Gastrocnemius medialis (tissue), 4 donors: ENCODE measurements at regions of chr17 and their contacts with region 1.

Region 1: DNA sequence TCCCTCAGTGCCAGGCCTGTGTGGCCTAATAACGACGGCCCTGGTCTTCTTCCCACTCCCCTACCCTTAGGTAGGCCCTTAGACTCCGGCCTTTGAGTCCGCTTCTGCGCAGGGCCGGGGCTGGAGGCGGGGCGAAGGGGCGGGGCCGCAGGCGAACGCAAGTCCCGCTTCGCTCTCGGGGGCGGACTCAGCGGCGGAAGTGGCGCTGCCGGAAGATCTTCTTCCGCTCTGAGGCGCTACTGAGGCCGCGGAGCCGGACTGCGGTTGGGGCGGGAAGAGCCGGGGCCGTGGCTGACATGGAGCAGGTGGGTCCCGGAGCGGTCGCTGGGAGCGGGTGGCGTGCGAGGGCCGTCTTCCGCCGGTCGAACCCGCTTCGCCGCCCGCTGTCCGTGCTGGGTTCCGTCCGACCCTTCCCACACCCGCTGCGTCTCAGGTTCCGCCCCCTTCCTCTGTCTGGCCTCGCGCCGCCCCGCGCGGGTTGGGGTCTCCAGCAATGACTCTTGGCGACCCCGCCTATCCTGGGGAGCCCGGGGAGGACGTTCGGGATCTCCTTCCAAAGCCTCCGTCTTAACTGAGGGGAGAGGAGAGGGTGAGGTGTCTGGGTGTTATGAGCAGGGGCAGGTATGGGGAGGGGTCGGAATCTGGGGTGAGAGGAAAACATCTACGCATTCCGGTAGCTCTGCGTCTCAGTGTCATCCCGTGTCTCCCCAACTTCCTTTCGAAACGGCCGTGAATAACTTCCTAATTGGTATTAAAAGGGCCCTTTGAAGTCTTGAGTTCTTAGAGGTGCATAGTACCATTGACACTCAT is at the start of gene STARD3:
- DNase-seq: peak; percentile 84 to 89
- ATAC-seq: peak; percentile 92 to 93
- H3K4me3 ChIP-seq: peak within 1 kb of the TSS; percentile 76 to 97 (median 92)
- H3K27ac ChIP-seq: peak within 1 kb of the TSS; percentile 93 to 99 (median 94)
- H3K4me1 ChIP-seq: peaks cover 41 to 48% of the 10 kb centered on the region in 2 donors
- H3K27me3 ChIP-seq: no peaks in the 10 kb centered on the region
- CTCF ChIP-seq: peak in 3 of 5 experiments; percentile 16 to 44 (median 26)
- POLR2A ChIP-seq: peak; percentile 46 to 56
- total RNA-seq, gene STARD3: 31.0 to 41.7 (median 41.0) TPM

Region 2: GRCh38 chr17:39199820-39200069 is 437.4 kb before region 1 on chr17:
- in situ Hi-C with region 1: no loop called
- intact Hi-C with region 1: no loop called
- DNase-seq: peak; percentile 92
- ATAC-seq: peak; percentile 69 to 82
- H3K4me3 ChIP-seq: peak overlapping the region; percentile 79 to 94 (median 84)
- H3K27ac ChIP-seq: peak overlapping the region; percentile 87 to 99 (median 94)
- H3K4me1 ChIP-seq: peaks cover 44 to 45% of the 10 kb centered on the region in 2 donors
- H3K27me3 ChIP-seq: no peaks in the 10 kb centered on the region
- CTCF ChIP-seq: no peak
- POLR2A ChIP-seq: peak in 1 of 2 donors; percentile 82

Region 3: GRCh38 chr17:39730095-39730921 is 93.2 kb after region 1 on chr17 and contains the start of gene MIEN1:
- in situ Hi-C with region 1: no loop called
- intact Hi-C with region 1: loop called (anchors 1 kb)
- DNase-seq: peak; percentile 80 to 86
- ATAC-seq: peak; percentile 96
- H3K4me3 ChIP-seq: peak within 1 kb of the TSS; percentile 78 to 92 (median 89)
- H3K27ac ChIP-seq: peak within 1 kb of the TSS; percentile 84 to 89 (median 87)
- H3K4me1 ChIP-seq: peaks cover 7 to 9% of the 10 kb centered on the region in 2 donors
- H3K27me3 ChIP-seq: no peaks in the 10 kb centered on the region
- CTCF ChIP-seq: peak; percentile 83 to 95 (median 92)
- POLR2A ChIP-seq: peak; percentile 65 to 87
- total RNA-seq, gene MIEN1: 42.8 to 81.9 (median 67.7) TPM